Ovary (tissue), 10 donors: ENCODE measurements at regions of chr9 and their contacts with region 1.

Region 1: GRCh38 chr9:80595192-80595591 is 1023.4 kb downstream of the TLE4 start:
- DNase-seq: no peak
- H3K4me3 ChIP-seq: no peak overlapping the region
- H3K27ac ChIP-seq: no peak overlapping the region
- H3K4me1 ChIP-seq: no peaks in the 10 kb centered on the region
- H3K27me3 ChIP-seq: no peaks in the 10 kb centered on the region
- CTCF ChIP-seq: no peak
- EP300 ChIP-seq: no peak
- POLR2A ChIP-seq: no peak

Region 2: DNA sequence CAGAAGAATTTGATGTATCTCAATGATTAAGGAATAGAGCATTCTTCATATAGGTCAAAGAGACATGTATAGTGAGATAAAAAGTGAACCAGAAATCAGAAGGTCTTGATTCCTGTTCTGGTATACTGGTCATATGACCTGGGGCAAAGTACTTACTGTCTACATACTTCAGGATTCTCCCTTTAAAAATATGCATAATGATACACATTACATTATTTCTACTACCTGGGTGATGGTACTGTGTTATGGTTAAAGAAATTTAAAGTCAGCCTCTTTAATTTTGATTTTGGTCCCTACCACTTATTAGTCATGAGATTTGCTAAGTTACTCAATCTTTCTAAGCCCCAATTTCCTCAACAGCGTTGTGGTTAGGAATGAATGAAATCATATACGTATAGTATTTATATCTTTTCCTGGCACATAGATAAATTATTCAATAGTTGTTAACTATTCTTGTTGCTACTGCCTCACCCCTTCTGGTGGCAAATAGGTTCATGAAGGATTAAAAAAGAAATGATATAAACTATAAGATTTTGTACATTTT is 39.3 kb before region 1 on chr9:
- intact Hi-C with region 1: no loop called
- DNase-seq: no peak
- H3K4me3 ChIP-seq: no peak overlapping the region
- H3K27ac ChIP-seq: no peak overlapping the region
- H3K4me1 ChIP-seq: no peaks in the 10 kb centered on the region
- H3K27me3 ChIP-seq: no peaks in the 10 kb centered on the region
- CTCF ChIP-seq: no peak
- EP300 ChIP-seq: no peak
- POLR2A ChIP-seq: no peak

Region 3: GRCh38 chr9:80926611-80927010 is 331.4 kb after region 1 on chr9:
- intact Hi-C with region 1: no loop called
- DNase-seq: no peak
- H3K4me3 ChIP-seq: no peak overlapping the region
- H3K27ac ChIP-seq: no peak overlapping the region
- H3K4me1 ChIP-seq: no peaks in the 10 kb centered on the region
- H3K27me3 ChIP-seq: no peaks in the 10 kb centered on the region
- CTCF ChIP-seq: no peak
- EP300 ChIP-seq: no peak
- POLR2A ChIP-seq: no peak

Region 4: DNA sequence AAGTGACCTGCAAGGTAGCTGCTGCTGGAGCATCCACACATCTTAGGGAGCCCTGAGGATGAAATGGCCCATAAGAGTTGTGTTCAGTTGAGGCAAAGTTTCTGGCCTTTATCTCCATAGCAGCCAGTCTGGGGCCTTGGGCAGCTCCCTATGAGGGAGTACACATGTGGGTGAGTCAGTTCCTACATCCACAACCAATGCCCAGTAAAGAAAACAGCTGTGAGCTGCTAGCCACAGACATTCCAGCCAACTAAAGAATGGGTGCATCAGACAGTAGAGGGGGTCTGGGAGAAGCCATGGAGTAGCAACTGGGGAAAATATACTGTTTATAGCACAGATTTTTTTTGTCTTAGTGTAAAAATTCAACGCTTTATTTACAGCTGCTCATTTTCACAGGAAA is 373.4 kb after region 1 on chr9:
- intact Hi-C with region 1: loop called in 1 of 4 experiments (anchors 10 kb)
- DNase-seq: no peak
- H3K4me3 ChIP-seq: no peak overlapping the region
- H3K27ac ChIP-seq: no peak overlapping the region
- H3K4me1 ChIP-seq: no peaks in the 10 kb centered on the region
- H3K27me3 ChIP-seq: no peaks in the 10 kb centered on the region
- CTCF ChIP-seq: no peak
- EP300 ChIP-seq: no peak
- POLR2A ChIP-seq: no peak